ENCODE measurements at regions of chr1 and their contacts with region 1.

Region 1: GRCh38 chr1:1122078-1122811 is 6.4 kb upstream of the C1orf159 start:
- DNase-seq: peak; percentile 90
- H3K4me3 ChIP-seq: peak overlapping the region in 3 of 4 donors; percentile 25 to 35 (median 33)
- H3K27ac ChIP-seq: peak overlapping the region in 1 of 4 donors; percentile 38
- H3K4me1 ChIP-seq: peaks cover 0 to 11% (median 11%) of the 10 kb centered on the region in 4 donors
- H3K27me3 ChIP-seq: peaks cover 0 to 40% (median 0%) of the 10 kb centered on the region in 3 donors
- CTCF ChIP-seq: peak; percentile 79 to 94 (median 90)
- EP300 ChIP-seq: no peak
- POLR2A ChIP-seq: no peak

Region 2: DNA sequence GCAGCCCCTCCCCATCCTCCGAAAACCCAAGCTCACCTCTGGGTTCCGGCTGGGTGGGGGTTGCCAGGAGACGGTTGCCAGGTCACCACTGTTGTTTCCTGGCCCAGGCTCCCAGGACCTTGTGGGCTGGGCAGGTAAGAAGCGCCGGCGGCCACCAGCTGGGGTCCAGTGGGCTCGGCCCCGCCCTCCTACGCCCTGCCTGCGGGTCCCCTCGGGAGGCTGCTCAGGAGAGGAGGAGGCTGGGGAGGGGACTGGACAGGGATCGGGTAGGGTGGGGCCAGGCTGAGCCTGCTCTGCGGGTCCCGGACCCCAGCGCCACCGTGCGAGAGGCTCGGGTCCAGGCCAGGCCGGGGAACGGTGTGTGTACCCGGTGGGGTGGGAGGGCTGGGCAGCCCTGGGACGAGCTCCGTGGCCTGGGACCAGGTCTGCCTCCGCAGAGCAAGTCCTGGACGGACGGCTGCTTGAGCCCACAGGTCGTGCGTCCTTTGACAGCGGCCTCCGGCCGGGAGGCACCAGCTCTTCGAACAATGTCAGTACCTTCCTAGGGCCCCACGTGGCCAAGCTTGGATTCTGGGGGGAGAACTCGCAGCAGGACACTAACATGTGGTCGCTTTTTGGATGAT is 51.7 kb after region 1 on chr1 and contains the start of gene TTLL10:
- intact Hi-C with region 1: no loop called
- DNase-seq: no peak
- H3K4me3 ChIP-seq: no peak within 1 kb of the TSS
- H3K27ac ChIP-seq: no peak within 1 kb of the TSS
- H3K4me1 ChIP-seq: peaks cover 0 to 7% (median 0%) of the 10 kb centered on the region in 4 donors
- H3K27me3 ChIP-seq: peaks cover 19 to 99% (median 72%) of the 10 kb centered on the region in 3 donors
- CTCF ChIP-seq: no peak
- EP300 ChIP-seq: no peak
- POLR2A ChIP-seq: no peak
- total RNA-seq, gene TTLL10: not detected

Region 3: DNA sequence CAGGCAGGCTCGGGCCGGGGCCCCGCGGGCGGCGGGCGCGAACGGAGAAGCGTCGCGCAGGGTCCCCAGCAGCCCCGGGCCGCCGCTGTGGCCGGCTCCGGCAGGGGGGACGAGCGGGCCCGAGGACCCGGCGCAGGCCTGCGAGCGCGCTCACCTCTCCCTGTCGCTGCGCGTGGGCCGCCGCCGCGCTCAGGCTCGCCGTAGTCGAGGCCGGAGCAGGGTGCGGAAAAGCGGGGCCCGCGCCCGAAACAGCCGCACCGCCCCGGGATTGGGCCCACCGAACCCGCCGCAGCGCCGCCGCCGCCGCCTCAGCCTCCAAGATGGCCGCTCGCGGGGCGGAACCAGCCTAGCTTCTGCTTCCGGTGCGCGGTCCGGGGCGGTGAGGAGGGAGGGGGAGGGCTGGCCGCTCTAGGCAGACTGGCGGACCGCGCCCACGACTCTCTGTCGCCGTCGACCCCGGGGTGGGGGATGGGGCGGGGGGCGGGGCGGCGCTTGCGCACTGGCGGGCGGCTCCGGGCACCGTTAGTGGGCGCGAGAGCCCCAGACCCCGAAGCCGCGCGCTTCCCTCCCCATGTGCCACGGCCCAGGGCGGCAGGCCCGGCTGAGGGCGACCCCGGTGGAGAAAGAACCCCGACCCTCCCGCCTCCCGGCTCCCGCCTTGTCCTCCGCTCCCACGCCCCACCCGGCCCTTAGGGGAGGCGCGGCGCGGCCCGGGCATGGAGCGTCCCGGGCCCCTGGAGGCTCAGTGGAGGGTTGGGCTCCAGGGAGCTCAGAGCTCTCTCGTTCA is 151.5 kb after region 1 on chr1 and contains the start of gene UBE2J2:
- intact Hi-C with region 1: loop called (anchors 5 kb)
- DNase-seq: peak; percentile 97
- H3K4me3 ChIP-seq: peak within 1 kb of the TSS; percentile 81 to 99 (median 88)
- H3K27ac ChIP-seq: peak within 1 kb of the TSS; percentile 88 to 95 (median 89)
- H3K4me1 ChIP-seq: peaks cover 0 to 50% (median 44%) of the 10 kb centered on the region in 4 donors
- H3K27me3 ChIP-seq: no peaks in the 10 kb centered on the region
- CTCF ChIP-seq: no peak
- EP300 ChIP-seq: no peak
- POLR2A ChIP-seq: no peak
- total RNA-seq, gene UBE2J2: 33.1 to 44.3 (median 34.0) TPM

Region 4: GRCh38 chr1:1290238-1290731 is 168.0 kb after region 1 on chr1:
- intact Hi-C with region 1: loop called (anchors 1 kb)
- DNase-seq: no peak
- H3K4me3 ChIP-seq: no peak overlapping the region
- H3K27ac ChIP-seq: no peak overlapping the region
- H3K4me1 ChIP-seq: peaks cover 0 to 9% (median 4%) of the 10 kb centered on the region in 4 donors
- H3K27me3 ChIP-seq: peaks cover 11 to 27% (median 22%) of the 10 kb centered on the region in 3 donors
- CTCF ChIP-seq: peak; percentile 33 to 67 (median 54)
- EP300 ChIP-seq: no peak
- POLR2A ChIP-seq: no peak